Activated naive CD4-positive, alpha-beta T cell treated with anti-CD3 and anti-CD28 coated beads for 36 hours (primary cell): ENCODE measurements at regions of chr15 and their contacts with region 1.

Region 1: DNA sequence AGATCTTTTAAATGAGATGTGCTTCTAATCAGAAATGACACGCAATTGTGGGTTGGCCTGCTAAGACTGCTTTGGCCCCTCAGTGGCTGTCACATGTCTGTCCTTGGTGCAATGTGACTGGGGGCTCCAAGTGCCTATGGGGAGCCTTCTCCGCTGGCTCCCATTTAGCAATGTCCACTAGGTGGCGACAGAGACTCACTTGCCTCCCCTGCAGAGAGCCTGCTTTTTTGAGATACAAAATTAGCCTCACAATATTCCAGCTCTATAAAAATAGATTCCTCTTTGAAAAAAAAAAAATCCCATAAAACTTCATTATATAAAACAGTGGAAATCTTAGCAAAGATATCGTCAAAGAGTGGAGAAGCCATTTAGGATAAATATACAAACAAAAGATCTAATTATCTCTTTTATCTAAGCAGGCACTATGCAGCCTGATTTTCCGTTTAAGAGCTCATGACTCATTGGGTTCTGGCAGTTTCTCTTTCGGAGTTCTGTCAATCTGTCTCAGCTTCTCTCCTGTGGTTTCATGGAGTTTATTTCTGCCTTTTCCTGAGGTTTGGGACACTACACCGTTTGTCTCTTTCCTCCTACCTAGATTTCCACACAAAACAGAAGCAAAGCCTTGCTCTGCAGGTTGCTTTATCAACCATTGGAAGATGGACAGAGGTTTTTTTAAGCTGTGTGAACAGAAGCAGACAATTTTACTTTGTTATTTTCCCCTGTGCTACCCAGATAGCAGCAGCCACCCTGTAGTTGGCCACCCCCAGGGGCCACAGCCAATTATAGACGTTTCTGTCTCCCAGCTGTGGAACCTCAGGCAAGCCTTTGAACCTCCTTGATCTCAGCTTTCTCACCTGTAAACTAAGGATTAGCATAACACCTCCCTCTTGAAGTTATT is 68.4 kb upstream of the TNFAIP8L3 start:
- DNase-seq: peak; percentile 76
- H3K4me3 Mint-ChIP-seq: no peak overlapping the region
- H3K27ac Mint-ChIP-seq: no peak overlapping the region
- H3K4me1 Mint-ChIP-seq: peaks cover 5% of the 10 kb centered on the region
- H3K27me3 Mint-ChIP-seq: peaks cover 4% of the 10 kb centered on the region

Region 2: DNA sequence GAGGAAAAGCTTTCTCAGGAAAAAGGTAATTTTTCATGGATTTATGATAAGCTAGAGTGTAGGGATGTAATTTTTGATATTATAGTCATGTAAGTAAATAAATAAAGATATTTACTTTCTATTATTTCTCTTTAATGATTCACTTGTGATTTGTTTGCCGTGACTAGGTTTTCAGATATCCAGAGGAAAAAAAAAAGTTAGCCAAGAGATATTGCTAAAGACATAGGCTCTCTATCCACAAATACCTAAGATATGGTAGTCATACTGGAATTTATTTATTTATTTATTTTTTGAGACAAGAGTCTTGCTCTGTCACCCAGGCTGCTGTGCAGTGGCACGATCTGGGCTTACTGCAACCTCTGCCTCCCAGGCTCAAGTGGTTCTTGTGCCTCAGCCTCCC is 194.8 kb before region 1 on chr15:
- CTCF ChIA-PET with region 1: no interaction called
- intact Hi-C with region 1: no loop called
- DNase-seq: no peak
- H3K4me3 Mint-ChIP-seq: no peak overlapping the region
- H3K27ac Mint-ChIP-seq: no peak overlapping the region
- H3K4me1 Mint-ChIP-seq: peaks cover 3% of the 10 kb centered on the region
- H3K27me3 Mint-ChIP-seq: no peaks in the 10 kb centered on the region

Region 3: GRCh38 chr15:51192521-51193280 is 29.6 kb after region 1 on chr15:
- CTCF ChIA-PET with region 1: interaction called, 46 read pairs
- intact Hi-C with region 1: loop called (anchors 1 kb)
- DNase-seq: peak; percentile 91
- H3K4me3 Mint-ChIP-seq: no peak overlapping the region
- H3K27ac Mint-ChIP-seq: no peak overlapping the region
- H3K4me1 Mint-ChIP-seq: no peaks in the 10 kb centered on the region
- H3K27me3 Mint-ChIP-seq: peaks cover 21% of the 10 kb centered on the region

Region 4: GRCh38 chr15:51203797-51204196 is 40.7 kb after region 1 on chr15:
- CTCF ChIA-PET with region 1: interaction called, 12 read pairs
- intact Hi-C with region 1: no loop called
- DNase-seq: no peak
- H3K4me3 Mint-ChIP-seq: no peak overlapping the region
- H3K27ac Mint-ChIP-seq: no peak overlapping the region
- H3K4me1 Mint-ChIP-seq: no peaks in the 10 kb centered on the region
- H3K27me3 Mint-ChIP-seq: peaks cover 6% of the 10 kb centered on the region

Region 5: GRCh38 chr15:51401872-51402517 is 238.9 kb after region 1 on chr15:
- CTCF ChIA-PET with region 1: interaction called, 20 read pairs
- intact Hi-C with region 1: loop called (anchors 1 kb)
- DNase-seq: peak; percentile 7
- H3K4me3 Mint-ChIP-seq: no peak overlapping the region
- H3K27ac Mint-ChIP-seq: no peak overlapping the region
- H3K4me1 Mint-ChIP-seq: no peaks in the 10 kb centered on the region
- H3K27me3 Mint-ChIP-seq: peaks cover 15% of the 10 kb centered on the region